Activated CD4-positive, alpha-beta memory T cell treated with anti-CD3 and anti-CD28 coated beads for 36 hours (primary cell): ENCODE measurements at regions of chr2 and their contacts with region 1.

Region 1: DNA sequence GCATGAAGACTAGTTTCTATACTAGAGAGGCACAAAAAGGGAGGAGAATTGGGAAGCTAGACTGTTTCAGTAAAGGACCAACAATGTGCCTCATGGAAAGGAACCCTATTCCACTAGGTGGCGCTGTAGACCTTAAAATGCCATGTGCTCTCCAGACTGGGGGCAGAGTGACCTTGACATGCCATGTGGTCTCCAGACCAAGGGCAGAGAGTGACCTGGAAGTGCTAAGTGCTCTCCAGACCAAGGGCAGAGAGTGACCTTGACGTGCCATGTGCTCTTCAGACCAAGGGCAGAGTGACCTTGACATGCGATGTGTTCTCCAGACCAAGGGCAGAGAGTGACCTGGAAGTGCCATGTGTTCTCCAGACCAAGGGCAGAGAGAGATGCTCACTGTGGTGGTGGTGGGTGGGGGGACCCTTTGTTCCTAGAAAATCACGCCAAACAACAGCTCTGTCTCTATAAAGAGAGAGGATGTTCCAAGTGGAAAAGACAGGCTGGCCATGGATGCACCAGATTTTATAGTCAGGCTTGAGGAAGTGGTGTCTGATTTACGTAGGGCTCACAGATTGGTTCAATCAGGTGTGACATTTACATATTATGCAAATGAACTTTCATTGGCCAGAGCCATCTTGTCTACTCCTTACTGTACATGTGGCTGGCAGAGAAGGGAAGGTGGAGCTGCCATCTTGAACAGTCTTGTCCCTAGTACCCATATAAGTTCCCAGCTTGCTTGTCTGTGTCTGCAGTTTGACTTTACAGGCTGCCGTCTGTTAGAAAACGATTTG is 344.0 kb upstream of the DDX18 start:
- DNase-seq: peak; percentile 13
- H3K4me3 Mint-ChIP-seq: no peak overlapping the region
- H3K27ac Mint-ChIP-seq: no peak overlapping the region
- H3K4me1 Mint-ChIP-seq: no peaks in the 10 kb centered on the region
- H3K27me3 Mint-ChIP-seq: no peaks in the 10 kb centered on the region

Region 2: DNA sequence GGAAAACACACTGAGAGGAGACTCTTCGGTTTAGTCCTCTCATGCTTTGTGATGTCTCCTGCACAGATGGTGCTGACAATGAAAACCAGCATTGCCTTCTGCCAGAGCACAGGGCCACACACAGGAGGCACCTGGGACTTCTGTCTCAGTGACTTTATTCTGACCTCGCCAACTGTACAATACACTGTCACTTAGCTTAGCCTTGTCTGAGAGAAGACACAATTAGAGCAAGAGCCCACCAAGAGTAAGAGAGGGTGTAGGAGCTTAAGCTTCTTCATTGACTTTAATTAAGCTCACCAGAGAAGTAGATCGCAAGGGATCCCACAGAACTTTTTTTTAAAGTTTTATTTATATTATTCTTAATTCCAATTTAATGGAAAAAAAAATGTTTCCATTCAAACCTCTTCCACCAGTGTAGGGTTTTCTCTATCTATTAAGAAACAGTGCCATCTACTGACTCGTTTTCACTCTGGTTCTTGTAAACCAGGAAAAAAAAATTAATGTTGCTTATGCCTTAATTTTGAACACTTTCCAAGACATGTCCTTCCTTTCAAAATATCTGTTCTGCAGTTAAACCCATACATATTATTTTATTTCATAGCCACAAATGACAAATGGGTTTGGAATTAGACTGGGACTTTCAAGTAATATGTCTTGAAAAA is 301.6 kb after region 1 on chr2:
- CTCF ChIA-PET with region 1: no interaction called
- POLR2A ChIA-PET with region 1: no interaction called
- intact Hi-C with region 1: loop called (anchors 5 kb)
- DNase-seq: no peak
- H3K4me3 Mint-ChIP-seq: no peak overlapping the region
- H3K27ac Mint-ChIP-seq: no peak overlapping the region
- H3K4me1 Mint-ChIP-seq: no peaks in the 10 kb centered on the region
- H3K27me3 Mint-ChIP-seq: peaks cover 17% of the 10 kb centered on the region